Prostate gland (tissue), 2 donors: ENCODE measurements at regions of chr15 and their contacts with region 1.

Region 1: DNA sequence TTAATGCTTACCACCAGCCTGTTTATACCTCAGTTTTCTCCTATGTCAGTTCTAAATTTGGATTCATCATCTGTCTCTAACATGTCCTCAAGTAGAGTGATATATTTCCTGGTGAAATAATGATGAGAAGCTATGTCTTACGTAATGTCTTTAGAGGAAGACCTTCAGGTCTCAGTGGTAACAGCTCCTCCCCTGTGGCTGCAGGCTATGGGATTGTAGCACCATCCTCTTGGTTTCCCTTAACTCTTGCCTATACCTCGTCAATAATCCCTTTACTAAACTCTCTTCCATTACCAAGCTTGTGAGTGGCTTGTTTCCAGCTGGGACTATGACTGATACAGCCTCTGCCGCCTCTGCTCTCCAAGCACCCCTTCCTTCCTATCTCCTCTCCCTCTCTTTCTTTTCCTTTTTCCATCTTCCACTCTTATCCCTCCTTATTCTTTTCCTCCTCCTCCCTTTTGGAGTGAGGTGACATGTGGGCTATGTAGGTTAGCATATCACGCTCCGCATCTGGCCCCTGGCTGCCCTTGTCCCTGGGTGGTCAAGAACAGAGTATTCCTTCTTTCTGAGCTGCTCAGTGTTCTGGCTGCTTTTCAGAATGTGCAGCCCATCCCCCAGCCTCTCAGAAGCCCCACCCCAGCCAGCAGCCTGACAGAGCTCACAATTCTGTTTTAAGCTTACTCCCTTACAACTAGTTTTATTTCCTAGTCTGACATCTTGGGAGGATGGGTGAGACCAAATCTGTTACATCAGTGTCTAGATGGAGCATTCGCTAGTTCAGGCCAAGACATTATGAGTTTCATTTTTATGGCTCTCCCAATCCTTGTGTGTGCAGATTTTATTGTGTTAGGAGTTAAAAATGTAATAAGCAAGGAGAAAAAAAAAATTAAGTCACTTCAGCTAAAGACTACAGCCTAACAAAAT is 75.0 kb upstream of the RNU6-1 start:
- DNase-seq: peak; percentile 56
- H3K4me3 ChIP-seq: no peak overlapping the region
- H3K27ac ChIP-seq: peak overlapping the region; percentile 84 to 85
- H3K4me1 ChIP-seq: peaks cover 17% of the 10 kb centered on the region
- H3K27me3 ChIP-seq: no peaks in the 10 kb centered on the region
- CTCF ChIP-seq: no peak
- POLR2A ChIP-seq: no peak

Region 2: GRCh38 chr15:67863442-67863987 is 51.3 kb before region 1 on chr15:
- intact Hi-C with region 1: loop called (anchors 2 kb)
- DNase-seq: peak; percentile 62
- H3K4me3 ChIP-seq: peak overlapping the region; percentile 28 to 31
- H3K27ac ChIP-seq: peak overlapping the region; percentile 27 to 54
- H3K4me1 ChIP-seq: no peaks in the 10 kb centered on the region
- H3K27me3 ChIP-seq: no peaks in the 10 kb centered on the region
- CTCF ChIP-seq: peak; percentile 88 to 97 (median 94)
- POLR2A ChIP-seq: no peak

Region 3: DNA sequence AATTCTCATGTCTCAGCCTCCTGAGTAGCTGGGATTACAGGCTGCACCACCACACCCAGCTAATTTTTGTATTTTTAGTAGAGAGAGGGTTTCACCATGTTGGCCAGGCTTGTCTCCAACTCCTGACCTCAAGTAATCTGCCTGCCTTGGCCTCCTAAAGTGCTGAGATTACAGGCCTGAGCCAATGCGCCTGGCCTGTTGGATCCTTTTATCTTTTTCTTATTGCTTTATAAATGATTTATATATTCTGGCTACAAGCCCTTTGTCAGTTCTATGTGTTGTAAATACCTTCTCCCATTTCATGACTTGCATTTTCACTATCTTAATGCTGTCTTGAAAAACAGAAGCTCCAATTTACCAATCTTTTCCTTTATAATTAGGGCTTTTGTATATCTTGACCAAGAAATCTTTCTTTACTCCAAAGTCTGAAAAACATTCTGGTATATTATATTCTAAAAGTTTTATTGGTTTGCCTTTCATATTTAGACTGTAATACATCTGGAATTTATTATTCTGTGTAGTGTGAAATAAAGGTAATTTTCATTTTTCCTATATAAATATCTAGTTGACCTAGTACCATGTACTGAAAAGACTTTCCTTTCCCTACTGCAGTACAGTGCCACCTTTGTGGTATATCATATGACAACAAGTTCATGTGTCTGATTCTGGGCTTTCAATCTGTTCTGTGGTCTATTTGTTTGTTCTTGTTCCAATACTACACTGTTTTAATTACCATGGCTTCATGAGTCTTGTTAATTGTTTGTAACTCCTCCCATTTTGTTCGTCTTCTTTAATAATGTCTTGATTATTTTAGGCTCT is 22.0 kb before region 1 on chr15:
- intact Hi-C with region 1: loop called (anchors 1 kb)
- DNase-seq: no peak
- H3K4me3 ChIP-seq: no peak overlapping the region
- H3K27ac ChIP-seq: peak overlapping the region; percentile 46 to 47
- H3K4me1 ChIP-seq: no peaks in the 10 kb centered on the region
- H3K27me3 ChIP-seq: no peaks in the 10 kb centered on the region
- CTCF ChIP-seq: no peak
- POLR2A ChIP-seq: no peak

Region 4: GRCh38 chr15:67967871-67968431 is 53.2 kb after region 1 on chr15:
- intact Hi-C with region 1: loop called (anchors 5 kb)
- DNase-seq: peak; percentile 46
- H3K4me3 ChIP-seq: peak overlapping the region; percentile 11 to 26
- H3K27ac ChIP-seq: peak overlapping the region; percentile 14 to 19
- H3K4me1 ChIP-seq: no peaks in the 10 kb centered on the region
- H3K27me3 ChIP-seq: no peaks in the 10 kb centered on the region
- CTCF ChIP-seq: no peak
- POLR2A ChIP-seq: no peak